ENCODE measurements at regions of chr14 and their contacts with region 1.

Region 1: GRCh38 chr14:64979336-64980074 is 7.2 kb upstream of the FNTB start:
- DNase-seq: peak; percentile 77
- ATAC-seq: peak; percentile 86
- H3K4me3 ChIP-seq: no peak overlapping the region
- H3K27ac ChIP-seq: no peak overlapping the region
- H3K4me1 ChIP-seq: peaks cover 3% of the 10 kb centered on the region; the same call in 1 of the 2 replicates
- H3K27me3 ChIP-seq: peaks cover 16% of the 10 kb centered on the region
- CTCF ChIP-seq: no peak
- POLR2A ChIP-seq: no peak
- RAD21 ChIP-seq: no peak

Region 2: DNA sequence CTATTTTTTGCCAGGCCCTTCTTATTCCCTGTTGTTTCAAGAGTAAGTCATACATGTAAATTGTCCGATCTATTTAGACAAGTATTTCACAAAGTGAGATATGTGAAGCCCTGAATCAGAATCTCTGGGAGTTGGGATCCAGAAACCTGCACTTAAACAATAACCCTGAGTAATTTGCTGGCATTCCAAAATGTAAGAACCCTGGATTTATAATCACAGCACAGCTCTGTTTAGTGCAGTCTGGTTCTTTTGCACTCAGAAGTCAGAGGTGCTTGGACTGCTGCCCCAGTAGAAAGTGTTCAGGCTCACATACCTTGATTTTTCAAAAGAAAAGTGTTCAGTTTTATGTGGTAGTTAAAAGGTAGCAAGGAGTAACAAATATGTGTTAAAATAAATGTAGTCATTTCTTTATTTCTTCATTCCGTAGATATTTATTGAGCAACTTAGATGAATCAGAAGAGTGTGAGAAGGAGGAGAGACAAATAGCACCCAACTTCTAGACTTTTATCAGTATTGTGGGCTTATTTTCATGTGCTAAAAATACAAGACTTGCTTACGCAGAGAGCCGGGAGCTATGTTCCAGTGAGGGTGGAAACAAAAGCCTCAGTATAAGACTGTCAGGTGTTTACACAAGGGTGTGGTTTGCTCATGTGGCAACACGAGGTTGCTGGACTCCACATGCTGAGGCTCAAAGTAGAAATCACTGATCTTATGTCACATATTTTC is 1056.6 kb before region 1 on chr14:
- CTCF ChIA-PET with region 1: no interaction called
- POLR2A ChIA-PET with region 1: interaction called, 13 read pairs
- dilution Hi-C with region 1: no loop called
- in situ Hi-C with region 1: no loop called
- intact Hi-C with region 1: no loop called
- DNase-seq: peak; percentile 17
- ATAC-seq: peak; percentile 35
- H3K4me3 ChIP-seq: no peak overlapping the region
- H3K27ac ChIP-seq: no peak overlapping the region
- H3K4me1 ChIP-seq: peaks cover 2% of the 10 kb centered on the region; the same call in 1 of the 2 replicates
- H3K27me3 ChIP-seq: no peaks in the 10 kb centered on the region
- CTCF ChIP-seq: no peak
- POLR2A ChIP-seq: no peak
- RAD21 ChIP-seq: no peak

Region 3: DNA sequence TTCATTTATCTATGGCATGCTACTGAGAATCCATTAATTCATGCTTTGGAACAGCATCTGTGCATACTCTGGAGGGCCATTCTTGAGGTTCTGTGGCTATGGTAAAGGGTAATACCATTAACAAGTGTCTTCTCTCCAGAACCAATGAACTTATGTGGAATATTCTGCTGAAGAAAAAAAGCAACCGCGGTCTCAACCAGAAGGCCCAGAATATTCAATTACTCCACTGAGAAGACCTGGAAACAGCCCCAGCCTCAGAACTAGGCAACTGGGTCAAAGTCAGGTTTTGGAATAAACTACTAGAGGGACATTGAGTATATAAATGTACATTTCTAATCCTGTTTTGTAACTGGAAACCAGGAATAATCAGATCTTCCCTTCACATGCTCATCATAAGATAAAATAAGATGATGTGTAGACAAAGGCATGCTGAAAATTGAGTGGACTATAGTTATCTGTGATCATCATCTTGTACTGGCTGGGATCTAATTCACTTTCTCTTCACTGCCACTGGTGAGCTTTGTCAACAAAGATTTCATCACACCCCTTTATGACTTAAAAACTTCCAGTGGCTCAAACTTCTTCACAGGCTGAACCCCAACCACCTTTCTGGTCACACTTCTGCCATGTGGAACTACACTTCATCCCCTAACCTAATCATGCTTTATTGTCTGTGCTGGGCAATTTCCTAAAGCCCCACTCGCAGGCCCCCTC is 105.8 kb before region 1 on chr14:
- CTCF ChIA-PET with region 1: no interaction called
- POLR2A ChIA-PET with region 1: no interaction called
- dilution Hi-C with region 1: no loop called
- in situ Hi-C with region 1: no loop called
- intact Hi-C with region 1: no loop called
- DNase-seq: peak; percentile 1
- ATAC-seq: no peak
- H3K4me3 ChIP-seq: no peak overlapping the region
- H3K27ac ChIP-seq: no peak overlapping the region
- H3K4me1 ChIP-seq: no peaks in the 10 kb centered on the region
- H3K27me3 ChIP-seq: peaks cover 59% of the 10 kb centered on the region
- CTCF ChIP-seq: no peak
- POLR2A ChIP-seq: no peak
- RAD21 ChIP-seq: no peak

Region 4: DNA sequence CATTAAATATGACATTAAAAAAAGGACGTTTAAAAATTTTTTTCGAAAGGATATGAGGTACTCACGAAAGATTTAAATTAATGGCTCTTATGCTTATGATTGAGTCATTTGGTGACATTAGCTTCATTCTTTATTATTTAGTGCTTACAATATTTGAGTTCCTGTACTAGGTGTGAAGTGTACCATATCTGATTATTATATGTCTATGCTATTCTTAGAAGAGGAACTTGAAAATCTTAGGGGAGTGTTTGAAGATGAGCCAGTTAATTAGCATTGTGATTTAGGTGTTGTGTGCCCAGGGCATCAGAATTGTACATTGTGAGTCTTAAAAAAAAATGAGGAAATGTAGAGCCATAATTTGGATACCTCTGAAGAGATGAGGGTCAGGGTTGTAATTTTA is 551.6 kb after region 1 on chr14:
- CTCF ChIA-PET with region 1: no interaction called
- POLR2A ChIA-PET with region 1: no interaction called
- dilution Hi-C with region 1: no loop called
- in situ Hi-C with region 1: no loop called
- intact Hi-C with region 1: no loop called
- DNase-seq: no peak
- ATAC-seq: no peak
- H3K4me3 ChIP-seq: no peak overlapping the region
- H3K27ac ChIP-seq: no peak overlapping the region
- H3K4me1 ChIP-seq: no peaks in the 10 kb centered on the region
- H3K27me3 ChIP-seq: no peaks in the 10 kb centered on the region
- CTCF ChIP-seq: no peak
- POLR2A ChIP-seq: no peak
- RAD21 ChIP-seq: no peak

Measured in IMR-90 (cell line).